CD4-positive, alpha-beta T cell (primary cell): ENCODE measurements at regions of chr9 and their contacts with region 1.

Region 1: DNA sequence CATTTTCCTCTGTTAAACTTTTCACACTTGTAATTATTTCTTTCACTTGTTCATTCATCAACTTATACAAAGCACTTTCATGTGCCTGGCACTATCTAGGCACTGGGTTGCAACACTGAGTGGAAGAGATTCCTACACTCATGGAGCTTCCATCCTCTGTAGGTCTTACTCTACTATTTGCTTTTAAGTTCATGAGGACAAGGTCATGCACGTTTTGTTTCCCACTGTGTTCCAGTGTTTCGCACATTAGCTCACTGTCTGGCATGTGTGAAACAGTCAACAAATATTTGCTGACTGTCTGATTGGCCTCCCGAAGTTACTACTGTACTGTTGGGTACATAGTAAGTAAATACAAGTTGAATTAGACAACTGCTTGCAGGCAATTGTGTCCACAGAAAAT is 87.9 kb upstream of the IFNK start:
- DNase-seq: no peak
- ATAC-seq: no peak
- H3K4me3 ChIP-seq: no peak overlapping the region
- H3K4me3 Mint-ChIP-seq: no peak overlapping the region
- H3K27ac ChIP-seq: no peak overlapping the region
- H3K27ac Mint-ChIP-seq: no peak overlapping the region
- H3K4me1 ChIP-seq: no peaks in the 10 kb centered on the region
- H3K4me1 Mint-ChIP-seq: peaks cover 11% of the 10 kb centered on the region
- H3K27me3 ChIP-seq: no peaks in the 10 kb centered on the region
- H3K27me3 Mint-ChIP-seq: no peaks in the 10 kb centered on the region
- CTCF ChIP-seq: no peak

Region 2: GRCh38 chr9:27489087-27489876 is 53.0 kb after region 1 on chr9:
- CTCF ChIA-PET with region 1: no interaction called
- POLR2A ChIA-PET with region 1: no interaction called
- intact Hi-C with region 1: loop called in 1 of 2 experiments (anchors 10 kb)
- DNase-seq: no peak
- ATAC-seq: no peak
- H3K4me3 ChIP-seq: no peak overlapping the region
- H3K4me3 Mint-ChIP-seq: no peak overlapping the region
- H3K27ac ChIP-seq: no peak overlapping the region
- H3K27ac Mint-ChIP-seq: no peak overlapping the region
- H3K4me1 ChIP-seq: no peaks in the 10 kb centered on the region
- H3K4me1 Mint-ChIP-seq: peaks cover 17% of the 10 kb centered on the region
- H3K27me3 ChIP-seq: no peaks in the 10 kb centered on the region
- H3K27me3 Mint-ChIP-seq: no peaks in the 10 kb centered on the region
- CTCF ChIP-seq: no peak